ENCODE measurements at regions of chr6 and their contacts with region 1.

Region 1: GRCh38 chr6:132798869-132799538 is 567 bp upstream of the SLC18B1 start:
- DNase-seq: peak; percentile 84
- ATAC-seq: peak; percentile 75
- H3K4me3 ChIP-seq: peak overlapping the region in 4 of 5 experiments; percentile 67 to 91 (median 82)
- H3K4me3 Mint-ChIP-seq: peak overlapping the region; percentile 96
- H3K27ac ChIP-seq: peak overlapping the region in 1 of 2 donors; percentile 87
- H3K27ac Mint-ChIP-seq: no peak overlapping the region
- H3K4me1 ChIP-seq: peaks cover 5 to 8% of the 10 kb centered on the region in 2 donors
- H3K4me1 Mint-ChIP-seq: peaks cover 18% of the 10 kb centered on the region
- H3K27me3 ChIP-seq: no peaks in the 10 kb centered on the region
- H3K27me3 Mint-ChIP-seq: no peaks in the 10 kb centered on the region
- CTCF ChIP-seq: peak; percentile 83

Region 2: DNA sequence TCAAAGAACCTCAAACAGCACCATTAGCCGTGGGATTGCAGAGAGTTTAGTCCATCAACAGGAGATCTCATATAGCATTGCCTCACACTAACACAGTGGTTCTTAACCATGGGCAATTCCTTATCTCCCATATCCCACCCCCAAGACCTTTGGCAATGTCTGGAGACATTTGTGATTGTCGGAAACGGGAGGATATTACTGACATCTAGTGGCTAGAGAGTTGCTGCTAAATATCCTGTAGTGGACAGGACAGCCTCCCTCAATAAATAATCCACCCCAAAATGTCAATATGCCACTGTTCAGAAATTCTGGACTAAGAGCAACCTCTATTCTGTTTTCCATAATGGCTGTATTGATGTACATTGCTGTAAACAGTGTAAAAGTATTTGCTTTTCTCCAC is 637.7 kb before region 1 on chr6:
- CTCF ChIA-PET with region 1: no interaction called
- POLR2A ChIA-PET with region 1: no interaction called
- intact Hi-C with region 1: no loop called
- DNase-seq: peak; percentile 29
- ATAC-seq: no peak
- H3K4me3 ChIP-seq: no peak overlapping the region
- H3K4me3 Mint-ChIP-seq: no peak overlapping the region
- H3K27ac ChIP-seq: no peak overlapping the region
- H3K27ac Mint-ChIP-seq: no peak overlapping the region
- H3K4me1 ChIP-seq: peaks cover 0 to 3% of the 10 kb centered on the region in 2 donors
- H3K4me1 Mint-ChIP-seq: peaks cover 20% of the 10 kb centered on the region
- H3K27me3 ChIP-seq: no peaks in the 10 kb centered on the region
- H3K27me3 Mint-ChIP-seq: no peaks in the 10 kb centered on the region
- CTCF ChIP-seq: peak; percentile 22

Region 3: GRCh38 chr6:132530293-132530974 is 268.6 kb before region 1 on chr6:
- CTCF ChIA-PET with region 1: interaction called, 4 read pairs
- POLR2A ChIA-PET with region 1: no interaction called
- intact Hi-C with region 1: loop called (anchors 1 kb)
- DNase-seq: peak; percentile 82
- ATAC-seq: peak; percentile 71
- H3K4me3 ChIP-seq: peak overlapping the region in 4 of 5 experiments; percentile 7 to 54 (median 46)
- H3K4me3 Mint-ChIP-seq: peak overlapping the region; percentile 85
- H3K27ac ChIP-seq: no peak overlapping the region
- H3K27ac Mint-ChIP-seq: peak overlapping the region; percentile 77
- H3K4me1 ChIP-seq: peaks cover 3 to 4% of the 10 kb centered on the region in 2 donors
- H3K4me1 Mint-ChIP-seq: peaks cover 4% of the 10 kb centered on the region
- H3K27me3 ChIP-seq: no peaks in the 10 kb centered on the region
- H3K27me3 Mint-ChIP-seq: no peaks in the 10 kb centered on the region
- CTCF ChIP-seq: peak; percentile 90

Region 4: GRCh38 chr6:132768051-132768517 is 30.9 kb before region 1 on chr6:
- CTCF ChIA-PET with region 1: interaction called, 20 read pairs
- POLR2A ChIA-PET with region 1: interaction called, 7 read pairs
- intact Hi-C with region 1: loop called (anchors 1 kb)
- DNase-seq: peak; percentile 60
- ATAC-seq: peak; percentile 79
- H3K4me3 ChIP-seq: no peak overlapping the region
- H3K4me3 Mint-ChIP-seq: peak overlapping the region; percentile 27
- H3K27ac ChIP-seq: no peak overlapping the region
- H3K27ac Mint-ChIP-seq: peak overlapping the region; percentile 38
- H3K4me1 ChIP-seq: peaks cover 7 to 14% of the 10 kb centered on the region in 2 donors
- H3K4me1 Mint-ChIP-seq: peaks cover 22% of the 10 kb centered on the region
- H3K27me3 ChIP-seq: no peaks in the 10 kb centered on the region
- H3K27me3 Mint-ChIP-seq: no peaks in the 10 kb centered on the region
- CTCF ChIP-seq: peak; percentile 63

Region 5: GRCh38 chr6:132788658-132789395 is 10.2 kb before region 1 on chr6:
- CTCF ChIA-PET with region 1: interaction called, 11 read pairs
- POLR2A ChIA-PET with region 1: no interaction called
- intact Hi-C with region 1: no loop called
- DNase-seq: no peak
- ATAC-seq: no peak
- H3K4me3 ChIP-seq: no peak overlapping the region
- H3K4me3 Mint-ChIP-seq: no peak overlapping the region
- H3K27ac ChIP-seq: no peak overlapping the region
- H3K27ac Mint-ChIP-seq: no peak overlapping the region
- H3K4me1 ChIP-seq: no peaks in the 10 kb centered on the region
- H3K4me1 Mint-ChIP-seq: no peaks in the 10 kb centered on the region
- H3K27me3 ChIP-seq: no peaks in the 10 kb centered on the region
- H3K27me3 Mint-ChIP-seq: no peaks in the 10 kb centered on the region
- CTCF ChIP-seq: no peak

Region 6: DNA sequence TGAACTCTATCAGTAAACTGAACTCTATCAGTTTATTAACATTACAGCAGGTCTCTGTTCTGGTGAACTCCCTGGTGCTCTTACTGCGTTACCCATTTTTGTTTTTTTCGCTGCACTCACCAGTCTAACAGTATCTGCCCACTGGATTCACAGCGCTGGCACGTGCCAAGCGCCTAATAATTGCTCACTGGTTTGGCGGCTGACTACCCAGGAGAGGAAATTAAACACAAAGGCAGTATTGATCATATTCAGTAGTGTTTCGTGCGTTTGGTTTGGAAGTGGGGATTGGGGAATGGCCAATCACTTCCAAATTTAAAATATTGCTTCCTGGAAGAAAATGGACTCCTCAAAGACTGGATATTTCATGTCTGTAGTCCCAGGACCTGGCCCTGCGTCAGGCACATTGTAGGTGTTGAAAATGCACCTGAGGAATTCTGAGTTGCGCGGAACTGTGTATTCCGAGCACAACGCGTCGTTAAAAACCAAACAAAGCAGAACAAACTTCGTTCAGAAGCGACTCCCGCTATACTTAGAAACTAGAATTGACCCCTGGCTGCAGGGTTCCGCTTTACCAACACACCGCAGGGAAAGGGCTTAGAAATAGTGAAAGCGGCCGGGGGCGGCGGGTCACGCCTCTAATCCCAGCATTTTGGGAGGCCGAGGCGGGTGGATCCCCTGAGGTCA is 14.3 kb after region 1 on chr6:
- CTCF ChIA-PET with region 1: interaction called, 33 read pairs
- POLR2A ChIA-PET with region 1: interaction called, 70 read pairs
- intact Hi-C with region 1: loop called (anchors 1 kb)
- DNase-seq: peak; percentile 75
- ATAC-seq: peak; percentile 18
- H3K4me3 ChIP-seq: peak overlapping the region; percentile 72 to 100 (median 83)
- H3K4me3 Mint-ChIP-seq: peak overlapping the region; percentile 98
- H3K27ac ChIP-seq: peak overlapping the region; percentile 65 to 82
- H3K27ac Mint-ChIP-seq: peak overlapping the region; percentile 98
- H3K4me1 ChIP-seq: peaks cover 25% of the 10 kb centered on the region in 2 donors
- H3K4me1 Mint-ChIP-seq: peaks cover 47% of the 10 kb centered on the region
- H3K27me3 ChIP-seq: no peaks in the 10 kb centered on the region
- H3K27me3 Mint-ChIP-seq: no peaks in the 10 kb centered on the region
- CTCF ChIP-seq: no peak

Region 7: DNA sequence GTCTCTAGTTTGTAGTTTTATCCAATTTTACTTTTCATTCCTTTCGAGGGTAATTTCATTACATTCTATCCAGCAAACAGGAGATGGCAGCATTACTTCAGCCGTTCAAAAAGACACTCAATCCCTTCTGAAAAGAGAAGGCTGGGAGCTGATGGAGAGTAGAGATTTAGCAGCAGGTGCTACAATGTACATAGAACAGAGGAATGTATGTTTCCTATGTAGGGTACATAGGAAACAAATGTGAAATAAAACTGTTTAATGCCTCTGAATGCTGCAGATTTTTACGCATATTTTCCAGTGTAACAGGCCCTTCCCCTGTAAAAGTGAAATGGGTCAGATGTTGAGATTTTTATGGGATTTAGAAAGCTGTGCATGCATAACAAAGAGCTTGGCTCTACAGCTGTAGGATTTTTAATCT is 31.3 kb after region 1 on chr6:
- CTCF ChIA-PET with region 1: no interaction called
- POLR2A ChIA-PET with region 1: no interaction called
- intact Hi-C with region 1: no loop called
- DNase-seq: no peak
- ATAC-seq: no peak
- H3K4me3 ChIP-seq: no peak overlapping the region
- H3K4me3 Mint-ChIP-seq: no peak overlapping the region
- H3K27ac ChIP-seq: no peak overlapping the region
- H3K27ac Mint-ChIP-seq: no peak overlapping the region
- H3K4me1 ChIP-seq: no peaks in the 10 kb centered on the region
- H3K4me1 Mint-ChIP-seq: no peaks in the 10 kb centered on the region
- H3K27me3 ChIP-seq: no peaks in the 10 kb centered on the region
- H3K27me3 Mint-ChIP-seq: peaks cover under 1% of the 10 kb centered on the region
- CTCF ChIP-seq: no peak

Region 8: DNA sequence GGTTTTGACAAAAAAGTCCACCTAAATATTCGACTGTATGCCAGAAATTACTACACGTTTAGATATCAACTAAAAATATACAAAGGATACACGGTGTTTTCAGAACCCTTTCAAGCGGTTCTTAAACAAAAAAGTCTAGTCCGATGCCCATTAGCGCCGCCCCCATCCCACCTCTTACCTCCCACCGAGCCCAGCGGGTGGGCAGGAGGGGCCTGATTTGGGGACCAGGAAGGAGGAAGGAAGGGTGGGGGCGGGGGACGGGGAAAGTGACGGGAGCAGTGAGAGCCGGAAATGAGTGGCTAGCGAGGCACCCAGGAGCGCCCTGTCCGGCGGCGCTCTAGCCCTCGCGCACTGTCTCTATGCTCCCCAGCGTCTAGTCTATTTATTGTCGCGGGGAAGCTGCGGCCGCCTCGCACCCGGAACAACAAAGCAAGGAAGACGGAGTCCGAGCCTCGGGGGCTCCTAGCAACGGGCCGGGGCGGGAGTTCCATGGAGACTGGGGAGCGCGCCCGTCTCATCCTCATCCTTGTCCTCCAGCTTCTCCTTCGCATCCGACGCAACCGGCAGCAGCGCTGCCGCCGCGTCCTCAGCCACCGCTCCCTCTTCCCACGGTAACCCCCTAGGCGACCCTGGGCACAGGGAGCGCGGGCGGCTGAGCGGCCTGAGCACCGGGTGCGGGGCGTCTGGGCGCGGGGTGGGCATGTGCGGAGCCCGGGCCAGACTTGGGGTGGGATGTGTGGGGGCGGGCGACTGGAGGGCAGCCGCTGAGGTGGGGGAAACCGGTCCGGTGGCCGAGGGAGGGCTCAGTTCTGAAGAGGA is 1154.0 kb after region 1 on chr6 and contains the start of gene TBPL1:
- CTCF ChIA-PET with region 1: no interaction called
- POLR2A ChIA-PET with region 1: no interaction called
- intact Hi-C with region 1: loop called (anchors 2 kb)
- DNase-seq: peak; percentile 97
- ATAC-seq: peak; percentile 78
- H3K4me3 ChIP-seq: peak within 1 kb of the TSS; percentile 78 to 98 (median 94)
- H3K4me3 Mint-ChIP-seq: peak within 1 kb of the TSS; percentile 98
- H3K27ac ChIP-seq: peak within 1 kb of the TSS; percentile 83 to 89
- H3K27ac Mint-ChIP-seq: peak within 1 kb of the TSS; percentile 97
- H3K4me1 ChIP-seq: peaks cover 20 to 27% of the 10 kb centered on the region in 2 donors
- H3K4me1 Mint-ChIP-seq: peaks cover 48% of the 10 kb centered on the region
- H3K27me3 ChIP-seq: no peaks in the 10 kb centered on the region
- H3K27me3 Mint-ChIP-seq: no peaks in the 10 kb centered on the region
- CTCF ChIP-seq: no peak
- total RNA-seq, gene TBPL1: 26.9 and 29.6 TPM in 2 replicates